Cardiac septum (tissue), 1 donor: ENCODE measurements at regions of chr3 and their contacts with region 1.

Region 1: GRCh38 chr3:12868039-12869034 is 27.0 kb upstream of the RPL32 start:
- DNase-seq: peak; percentile 84

Region 2: GRCh38 chr3:12891985-12892839 is 23.9 kb after region 1 on chr3:
- intact Hi-C with region 1: loop called (anchors 2 kb)
- DNase-seq: no peak